ENCODE measurements at regions of chr9 and their contacts with region 1.

Region 1: GRCh38 chr9:34591248-34591916 is 1.9 kb upstream of the CNTFR start:
- DNase-seq: peak; percentile 67
- H3K4me3 Mint-ChIP-seq: peak overlapping the region; percentile 21
- H3K27ac Mint-ChIP-seq: no peak overlapping the region
- H3K4me1 Mint-ChIP-seq: peaks cover 15% of the 10 kb centered on the region
- H3K27me3 Mint-ChIP-seq: peaks cover 68% of the 10 kb centered on the region

Region 2: GRCh38 chr9:34403554-34404380 is 187.6 kb before region 1 on chr9:
- intact Hi-C with region 1: loop called (anchors 1 kb)
- DNase-seq: peak; percentile 31
- H3K4me3 Mint-ChIP-seq: no peak overlapping the region
- H3K27ac Mint-ChIP-seq: no peak overlapping the region
- H3K4me1 Mint-ChIP-seq: no peaks in the 10 kb centered on the region
- H3K27me3 Mint-ChIP-seq: no peaks in the 10 kb centered on the region

Region 3: DNA sequence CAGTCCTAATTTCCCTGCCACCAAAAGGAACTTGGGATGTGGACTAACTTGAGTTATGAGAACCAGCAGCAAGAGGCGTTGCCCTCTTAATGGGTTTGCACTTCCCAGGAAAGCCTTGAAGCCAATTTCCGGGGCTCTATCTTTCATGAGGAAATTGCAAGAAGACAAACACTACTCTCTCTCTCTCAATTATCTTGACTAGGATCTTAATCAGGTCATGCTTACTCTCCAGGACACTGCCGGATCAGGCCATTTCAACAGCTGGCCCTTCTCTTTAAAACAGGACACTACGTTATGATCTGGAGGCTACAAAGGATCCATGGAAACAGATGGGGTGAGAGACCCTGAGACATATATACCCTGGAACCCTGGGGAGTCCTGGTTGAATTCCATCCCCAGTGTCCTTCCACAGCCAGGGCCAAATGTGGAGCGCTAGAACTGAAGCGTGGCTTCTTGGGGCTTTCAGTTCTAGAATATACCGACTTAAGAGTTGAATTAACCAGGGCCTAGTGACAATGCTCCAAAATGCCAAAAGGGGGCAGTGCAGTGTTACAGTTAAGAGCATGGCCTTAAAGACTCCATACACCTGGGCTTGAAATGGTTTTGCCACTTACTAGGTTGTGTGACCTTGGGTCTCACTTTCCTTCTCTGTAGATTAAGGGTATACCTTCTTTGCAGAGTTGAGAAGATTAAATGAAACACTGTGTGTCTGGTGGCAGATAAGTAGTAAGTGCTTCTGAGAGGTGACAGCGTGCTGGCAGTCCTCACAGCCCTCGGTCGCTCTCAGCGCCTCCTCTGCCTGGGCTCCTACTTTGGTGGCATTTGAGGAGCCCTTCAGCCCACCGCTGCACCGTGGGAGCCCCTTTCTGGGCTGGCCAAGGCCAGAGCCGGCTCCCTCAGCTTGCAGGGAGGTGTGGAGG is 154.1 kb before region 1 on chr9:
- intact Hi-C with region 1: loop called (anchors 1 kb)
- DNase-seq: peak; percentile 50
- H3K4me3 Mint-ChIP-seq: no peak overlapping the region
- H3K27ac Mint-ChIP-seq: no peak overlapping the region
- H3K4me1 Mint-ChIP-seq: peaks cover 6% of the 10 kb centered on the region
- H3K27me3 Mint-ChIP-seq: no peaks in the 10 kb centered on the region

Region 4: DNA sequence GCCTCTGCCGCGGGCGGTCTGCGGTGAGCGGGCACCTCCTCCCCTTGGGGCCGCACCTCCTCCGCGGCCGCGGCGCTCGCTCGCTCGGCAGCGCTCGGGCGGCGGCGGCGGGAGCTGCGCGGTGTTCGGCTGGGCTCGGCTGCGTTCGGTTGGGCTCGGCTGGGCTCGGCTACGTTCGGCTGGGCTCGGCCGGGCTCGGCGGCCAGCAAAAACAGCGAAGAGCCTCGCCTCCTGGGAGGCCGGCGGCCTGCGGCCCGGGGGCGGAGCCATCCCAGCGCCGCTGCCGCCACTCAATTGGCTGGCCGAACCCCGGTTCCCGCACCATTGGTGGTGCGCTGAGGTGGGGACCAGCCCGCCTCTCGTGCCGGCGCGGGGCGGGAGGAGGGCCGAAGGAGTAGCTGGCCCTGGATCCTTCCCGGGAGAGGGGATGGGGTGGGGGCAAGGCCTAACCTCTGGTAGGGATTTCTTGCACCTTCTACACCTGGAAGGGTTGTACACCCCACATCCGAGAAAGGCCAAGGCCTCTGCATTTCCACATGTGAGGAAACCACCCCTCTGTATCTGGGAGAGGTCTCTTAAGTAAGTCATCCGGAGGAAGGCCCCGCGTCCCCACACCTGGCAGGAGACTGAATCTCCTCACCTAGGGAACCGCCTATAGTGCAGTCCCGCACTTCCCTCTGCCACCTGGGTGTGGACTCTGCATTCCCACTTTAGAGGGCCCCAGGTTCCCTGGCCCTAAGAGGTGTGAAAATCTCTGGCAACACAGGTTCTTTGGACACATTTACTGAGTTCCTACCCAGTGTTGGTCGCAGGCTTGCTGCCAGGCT is 68.2 kb before region 1 on chr9 and contains the start of gene ENHO:
- intact Hi-C with region 1: loop called (anchors 2 kb)
- DNase-seq: peak; percentile 91
- H3K4me3 Mint-ChIP-seq: peak within 1 kb of the TSS; percentile 73
- H3K27ac Mint-ChIP-seq: peak within 1 kb of the TSS; percentile 75
- H3K4me1 Mint-ChIP-seq: peaks cover 13% of the 10 kb centered on the region
- H3K27me3 Mint-ChIP-seq: peaks cover 49% of the 10 kb centered on the region
- total RNA-seq, gene ENHO: not detected in 2 replicates

Region 5: DNA sequence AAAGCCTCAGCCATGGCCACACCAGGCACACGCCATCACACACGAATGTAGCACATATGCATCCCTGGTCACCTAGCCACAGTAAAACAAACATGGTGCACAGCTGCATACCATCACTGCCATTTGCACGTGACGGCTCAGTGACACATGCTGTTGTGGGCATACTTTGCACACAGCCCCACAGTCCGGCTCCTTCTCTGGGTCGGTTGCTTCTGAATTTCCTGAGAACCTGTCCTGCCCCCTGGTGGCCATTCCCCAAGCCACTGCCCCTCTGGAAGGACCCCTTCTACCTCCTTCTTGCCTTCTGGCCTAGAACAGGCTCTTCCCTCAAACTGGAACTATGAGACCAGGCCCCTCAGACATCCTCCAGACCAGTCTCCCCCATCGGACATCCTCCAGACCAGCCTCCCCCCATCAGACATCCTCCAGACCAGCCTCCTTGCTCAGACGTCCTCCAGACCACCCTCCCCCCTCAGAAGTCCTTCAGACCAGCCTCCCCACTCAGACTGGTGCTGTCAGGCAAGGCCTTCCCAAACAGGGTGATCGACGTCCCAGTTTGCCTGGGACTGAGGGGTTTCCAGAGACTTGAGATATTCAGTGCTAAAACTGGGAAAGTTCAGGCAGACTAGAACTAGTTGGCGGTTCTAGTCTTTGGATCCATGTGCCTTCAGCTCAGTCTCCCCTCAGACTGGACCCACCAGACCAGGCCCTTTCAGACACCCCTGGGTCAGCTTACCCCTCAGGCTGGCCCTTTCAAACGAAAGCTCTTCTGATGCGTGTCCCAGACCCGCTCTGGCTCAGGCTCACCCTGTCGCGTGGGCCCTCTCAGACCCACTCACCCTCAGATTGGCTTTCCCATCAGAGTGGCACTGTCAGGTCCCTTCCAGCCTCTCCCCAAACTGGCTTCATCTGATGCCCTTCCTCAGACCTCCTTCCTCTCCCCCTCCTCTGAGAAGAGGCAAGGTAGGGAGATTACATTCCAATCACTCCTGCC is 44.3 kb before region 1 on chr9:
- intact Hi-C with region 1: loop called (anchors 1 kb)
- DNase-seq: no peak
- H3K4me3 Mint-ChIP-seq: no peak overlapping the region
- H3K27ac Mint-ChIP-seq: no peak overlapping the region
- H3K4me1 Mint-ChIP-seq: no peaks in the 10 kb centered on the region
- H3K27me3 Mint-ChIP-seq: peaks cover 14% of the 10 kb centered on the region

Region 6: DNA sequence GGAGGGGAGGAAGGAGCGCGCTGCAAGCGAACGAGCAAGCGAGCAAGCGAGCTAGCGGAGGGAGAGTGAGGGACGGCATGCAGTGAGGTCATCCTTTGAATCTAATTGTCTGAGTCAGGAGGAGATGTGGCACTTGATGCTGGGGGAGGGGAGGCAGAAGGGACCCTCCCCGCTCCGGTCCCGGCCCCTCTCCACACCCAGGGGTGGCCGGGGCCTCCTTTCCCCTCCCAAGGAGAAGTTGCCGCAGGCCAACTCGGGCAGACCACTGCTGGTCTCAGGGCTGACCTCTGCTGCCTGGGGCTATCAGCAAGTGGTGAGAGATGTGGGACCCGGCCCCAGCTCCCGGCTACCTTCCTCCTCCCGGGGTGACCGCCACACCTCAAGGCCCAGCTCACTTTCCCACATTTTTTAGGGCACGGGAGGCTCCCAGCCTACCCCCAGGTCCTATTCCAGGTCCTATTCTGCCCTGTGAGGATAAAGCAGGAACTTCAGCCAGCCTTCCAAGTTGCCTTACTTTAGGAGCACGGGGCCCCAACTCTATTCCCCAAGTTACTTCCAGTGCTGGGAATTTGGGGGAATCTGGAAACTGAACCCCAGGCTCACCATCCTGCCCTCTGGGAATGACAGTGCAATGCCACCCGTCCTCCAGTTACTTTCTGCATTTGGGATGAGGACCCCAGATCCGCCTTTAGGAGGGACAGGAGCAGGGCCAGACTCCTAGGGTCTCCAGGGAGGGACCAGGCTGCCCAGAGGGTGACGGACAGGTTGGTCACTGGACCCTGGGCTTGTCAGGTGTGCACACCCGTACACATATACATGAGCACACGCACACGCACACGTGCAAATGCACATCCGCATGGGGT is 12.9 kb before region 1 on chr9:
- intact Hi-C with region 1: loop called (anchors 1 kb)
- DNase-seq: no peak
- H3K4me3 Mint-ChIP-seq: no peak overlapping the region
- H3K27ac Mint-ChIP-seq: no peak overlapping the region
- H3K4me1 Mint-ChIP-seq: no peaks in the 10 kb centered on the region
- H3K27me3 Mint-ChIP-seq: peaks cover 54% of the 10 kb centered on the region

Region 7: DNA sequence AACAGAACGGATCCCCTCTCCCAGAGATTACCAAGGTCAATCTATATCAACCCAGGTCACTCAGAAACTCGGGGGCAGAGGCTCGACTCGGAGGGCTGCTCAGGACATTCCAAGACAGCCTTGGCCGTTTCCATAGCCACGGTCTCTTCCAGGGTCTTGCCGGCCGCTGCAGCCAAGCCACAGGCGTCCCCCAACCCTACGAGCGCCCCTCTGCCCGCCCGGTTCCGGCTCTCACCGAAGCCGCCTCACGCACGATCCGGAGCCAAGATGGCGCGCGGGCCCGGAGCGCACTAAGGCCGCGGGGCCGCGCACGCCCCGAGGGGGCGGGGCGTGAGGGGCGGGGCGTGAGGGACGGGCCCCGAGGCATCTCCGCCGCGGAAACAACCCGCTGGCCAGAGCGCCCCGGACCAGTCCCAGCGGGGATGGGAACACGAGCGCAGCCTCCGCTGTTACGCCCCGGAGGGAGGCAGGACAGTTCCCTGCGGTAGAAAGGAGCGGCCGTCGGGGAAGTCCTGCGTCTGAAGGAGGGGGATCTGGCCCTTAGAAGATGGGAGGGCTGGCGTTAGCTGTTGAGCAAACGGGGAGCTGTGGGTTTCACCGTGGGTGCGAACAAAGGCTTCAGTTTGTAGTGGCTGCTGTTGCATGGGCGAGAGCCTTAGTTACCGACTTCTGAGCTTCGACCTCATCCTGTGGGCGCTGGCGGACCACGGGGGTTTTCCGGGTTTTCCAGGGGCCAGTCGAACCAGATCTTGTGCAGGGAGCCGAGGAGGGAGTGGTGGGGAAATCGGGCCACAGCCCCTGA is 20.6 kb after region 1 on chr9 and contains the start of gene RPP25L:
- intact Hi-C with region 1: no loop called
- DNase-seq: peak; percentile 84
- H3K4me3 Mint-ChIP-seq: peak within 1 kb of the TSS; percentile 95
- H3K27ac Mint-ChIP-seq: peak within 1 kb of the TSS; percentile 96
- H3K4me1 Mint-ChIP-seq: peaks cover 24% of the 10 kb centered on the region
- H3K27me3 Mint-ChIP-seq: no peaks in the 10 kb centered on the region
- total RNA-seq, gene RPP25L: 37.5 and 40.2 TPM in 2 replicates

Measured in activated T-helper 1 cell treated with anti-CD3 and anti-CD28 coated beads, Interleukin-12 subunit alpha, Interleukin-12 subunit beta, Interleukin-2, Interleukin-4 antibody, amounts not matched to agents 30 ng/mL and 10 ng/mL and 1 ng/mL, durations not matched to agents 14 hours and 24 hours and 36 hours (primary cell).